ENCODE measurements at regions of chr20 and their contacts with region 1.

Region 1: GRCh38 chr20:62972270-62973032 is 19.9 kb downstream of the SLC17A9 start:
- DNase-seq: peak; percentile 93
- ATAC-seq: peak; percentile 99
- H3K4me3 Mint-ChIP-seq: peak overlapping the region; percentile 4
- H3K27ac Mint-ChIP-seq: no peak overlapping the region
- H3K4me1 Mint-ChIP-seq: peaks cover 19% of the 10 kb centered on the region
- H3K27me3 Mint-ChIP-seq: peaks cover 37% of the 10 kb centered on the region

Region 2: GRCh38 chr20:62900052-62900691 is 72.3 kb before region 1 on chr20:
- CTCF ChIA-PET with region 1: interaction called, 3 read pairs
- POLR2A ChIA-PET with region 1: no interaction called
- intact Hi-C with region 1: loop called in 1 of 2 experiments (anchors 2 kb)
- DNase-seq: peak; percentile 86
- ATAC-seq: peak; percentile 93
- H3K4me3 Mint-ChIP-seq: no peak overlapping the region
- H3K27ac Mint-ChIP-seq: peak overlapping the region; percentile 56
- H3K4me1 Mint-ChIP-seq: peaks cover 38% of the 10 kb centered on the region
- H3K27me3 Mint-ChIP-seq: no peaks in the 10 kb centered on the region

Region 3: DNA sequence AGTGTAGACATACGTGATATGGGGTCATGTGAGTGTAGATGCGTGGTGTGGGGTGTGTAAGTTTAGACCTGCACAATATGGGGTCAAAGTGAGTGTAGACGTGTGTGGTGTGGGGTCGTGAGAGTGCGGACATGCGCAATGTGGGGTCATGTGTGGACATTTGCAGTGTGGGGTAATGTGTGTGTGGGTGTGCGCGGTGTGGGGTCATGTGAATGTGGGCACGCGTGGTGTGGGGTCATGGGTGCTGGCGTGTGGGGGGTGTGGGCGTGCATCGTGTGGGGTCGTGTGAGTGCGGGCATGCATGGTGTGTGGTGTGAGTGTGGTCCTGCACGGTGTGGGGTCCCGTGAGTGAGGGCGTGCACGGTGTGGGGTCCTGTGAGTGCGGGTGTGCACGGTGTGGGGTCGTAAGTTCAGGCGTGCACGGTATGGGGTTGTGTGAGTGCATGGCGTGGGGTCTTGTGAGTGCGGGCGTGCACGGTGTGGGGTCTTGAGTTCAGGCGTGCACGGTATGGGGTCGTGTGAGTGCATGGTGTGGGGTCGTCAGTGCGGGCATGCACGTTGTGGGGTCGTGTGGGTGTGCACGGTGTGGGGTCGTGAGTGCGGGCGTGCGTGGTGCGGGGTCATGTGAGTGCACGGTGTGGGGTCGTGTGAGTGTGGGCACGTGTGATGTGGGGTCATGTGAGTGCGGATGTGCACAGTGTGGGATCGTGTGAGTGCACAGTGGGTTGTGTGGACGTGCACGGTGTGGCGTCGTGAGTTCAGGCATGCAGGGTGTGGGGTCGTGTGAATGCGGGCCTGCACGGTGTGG is 1297.4 kb after region 1 on chr20:
- CTCF ChIA-PET with region 1: no interaction called
- POLR2A ChIA-PET with region 1: no interaction called
- intact Hi-C with region 1: no loop called
- DNase-seq: no peak
- ATAC-seq: no peak
- H3K4me3 Mint-ChIP-seq: no peak overlapping the region
- H3K27ac Mint-ChIP-seq: no peak overlapping the region
- H3K4me1 Mint-ChIP-seq: peaks cover 5% of the 10 kb centered on the region
- H3K27me3 Mint-ChIP-seq: no peaks in the 10 kb centered on the region